AG04450 (cell line): ENCODE measurements at regions of chr3 and their contacts with region 1.

Region 1: GRCh38 chr3:178436773-178437172 is 99.5 kb upstream of the KCNMB2 start:
- DNase-seq: no peak
- H3K4me3 ChIP-seq: no peak overlapping the region
- H3K27ac ChIP-seq: no peak overlapping the region
- H3K27me3 ChIP-seq: no peaks in the 10 kb centered on the region
- CTCF ChIP-seq: peak; percentile 67

Region 2: DNA sequence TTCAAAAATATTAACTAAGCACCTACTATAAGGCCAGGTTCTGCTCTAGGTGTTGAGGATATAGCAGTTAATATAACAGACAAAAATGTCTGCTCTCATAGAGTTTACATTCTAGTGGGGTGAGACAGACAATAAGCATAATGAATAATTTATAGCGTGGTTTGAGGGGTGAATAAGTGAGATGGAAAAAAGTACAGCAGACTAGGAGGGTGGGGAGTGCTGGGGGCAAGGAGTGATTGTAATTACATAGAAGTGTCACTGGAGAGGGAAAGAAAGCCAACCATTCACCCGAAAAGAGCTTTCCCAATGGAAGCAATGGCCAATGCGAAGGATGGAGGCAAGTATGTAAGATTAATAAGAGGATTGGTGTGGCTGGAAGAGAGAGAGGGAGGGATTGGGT is 453.5 kb before region 1 on chr3:
- CTCF ChIA-PET with region 1: no interaction called
- POLR2A ChIA-PET with region 1: no interaction called
- DNase-seq: no peak
- H3K4me3 ChIP-seq: no peak overlapping the region
- H3K27ac ChIP-seq: no peak overlapping the region
- H3K27me3 ChIP-seq: no peaks in the 10 kb centered on the region
- CTCF ChIP-seq: no peak

Region 3: GRCh38 chr3:178289544-178290160 is 147.1 kb before region 1 on chr3:
- CTCF ChIA-PET with region 1: no interaction called
- POLR2A ChIA-PET with region 1: no interaction called
- DNase-seq: no peak
- H3K4me3 ChIP-seq: no peak overlapping the region
- H3K27ac ChIP-seq: no peak overlapping the region
- H3K27me3 ChIP-seq: no peaks in the 10 kb centered on the region
- CTCF ChIP-seq: no peak

Region 4: GRCh38 chr3:178343433-178344038 is 93.2 kb before region 1 on chr3:
- CTCF ChIA-PET with region 1: no interaction called
- POLR2A ChIA-PET with region 1: no interaction called
- DNase-seq: no peak
- H3K4me3 ChIP-seq: no peak overlapping the region
- H3K27ac ChIP-seq: no peak overlapping the region
- H3K27me3 ChIP-seq: no peaks in the 10 kb centered on the region
- CTCF ChIP-seq: no peak

Region 5: GRCh38 chr3:178419071-178419470 is 17.7 kb before region 1 on chr3:
- CTCF ChIA-PET with region 1: interaction called, 15 read pairs
- POLR2A ChIA-PET with region 1: no interaction called
- DNase-seq: no peak
- H3K4me3 ChIP-seq: no peak overlapping the region
- H3K27ac ChIP-seq: no peak overlapping the region
- H3K27me3 ChIP-seq: no peaks in the 10 kb centered on the region
- CTCF ChIP-seq: no peak

Region 6: GRCh38 chr3:178768072-178768864 is 331.5 kb after region 1 on chr3:
- CTCF ChIA-PET with region 1: no interaction called
- POLR2A ChIA-PET with region 1: no interaction called
- DNase-seq: no peak
- H3K4me3 ChIP-seq: no peak overlapping the region
- H3K27ac ChIP-seq: no peak overlapping the region
- H3K27me3 ChIP-seq: no peaks in the 10 kb centered on the region
- CTCF ChIP-seq: no peak

Region 7: GRCh38 chr3:178966299-178967176 is 529.8 kb after region 1 on chr3:
- CTCF ChIA-PET with region 1: interaction called, 127 read pairs
- POLR2A ChIA-PET with region 1: no interaction called
- DNase-seq: no peak
- H3K4me3 ChIP-seq: no peak overlapping the region
- H3K27ac ChIP-seq: no peak overlapping the region
- H3K27me3 ChIP-seq: no peaks in the 10 kb centered on the region
- CTCF ChIP-seq: peak; percentile 61